IMR-90 (cell line): ENCODE measurements at regions of chr1 and their contacts with region 1.

Region 1: GRCh38 chr1:74771913-74772515 is 39.1 kb downstream of the TYW3 start:
- DNase-seq: peak; percentile 51
- ATAC-seq: peak; percentile 77
- H3K4me3 ChIP-seq: no peak overlapping the region
- H3K27ac ChIP-seq: no peak overlapping the region
- H3K4me1 ChIP-seq: no peaks in the 10 kb centered on the region
- H3K27me3 ChIP-seq: no peaks in the 10 kb centered on the region
- CTCF ChIP-seq: peak; percentile 83
- POLR2A ChIP-seq: no peak
- RAD21 ChIP-seq: peak; percentile 90

Region 2: DNA sequence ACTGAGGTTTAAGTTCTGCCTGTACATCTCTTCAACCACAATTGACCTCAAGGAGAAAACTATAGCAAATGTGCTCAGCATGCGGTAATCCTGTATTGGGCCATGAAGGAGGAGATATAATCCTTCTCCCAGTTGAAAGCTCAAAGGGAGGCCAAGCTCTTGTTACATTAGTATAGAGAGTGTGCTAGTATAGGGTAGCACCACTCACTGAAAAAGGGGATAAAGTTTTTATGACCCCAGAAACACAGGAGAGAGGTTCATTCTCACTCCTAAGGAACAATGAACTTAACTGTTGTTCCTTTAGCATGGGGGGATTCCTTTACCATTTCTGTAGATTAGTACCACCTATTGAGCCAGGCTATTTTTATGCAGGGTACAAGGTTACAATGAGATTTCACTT is 841.7 kb before region 1 on chr1:
- CTCF ChIA-PET with region 1: no interaction called
- POLR2A ChIA-PET with region 1: no interaction called
- dilution Hi-C with region 1: no loop called
- in situ Hi-C with region 1: no loop called
- intact Hi-C with region 1: no loop called
- DNase-seq: no peak
- ATAC-seq: no peak
- H3K4me3 ChIP-seq: no peak overlapping the region
- H3K27ac ChIP-seq: no peak overlapping the region
- H3K4me1 ChIP-seq: no peaks in the 10 kb centered on the region
- H3K27me3 ChIP-seq: no peaks in the 10 kb centered on the region
- CTCF ChIP-seq: no peak
- POLR2A ChIP-seq: no peak
- RAD21 ChIP-seq: no peak

Region 3: DNA sequence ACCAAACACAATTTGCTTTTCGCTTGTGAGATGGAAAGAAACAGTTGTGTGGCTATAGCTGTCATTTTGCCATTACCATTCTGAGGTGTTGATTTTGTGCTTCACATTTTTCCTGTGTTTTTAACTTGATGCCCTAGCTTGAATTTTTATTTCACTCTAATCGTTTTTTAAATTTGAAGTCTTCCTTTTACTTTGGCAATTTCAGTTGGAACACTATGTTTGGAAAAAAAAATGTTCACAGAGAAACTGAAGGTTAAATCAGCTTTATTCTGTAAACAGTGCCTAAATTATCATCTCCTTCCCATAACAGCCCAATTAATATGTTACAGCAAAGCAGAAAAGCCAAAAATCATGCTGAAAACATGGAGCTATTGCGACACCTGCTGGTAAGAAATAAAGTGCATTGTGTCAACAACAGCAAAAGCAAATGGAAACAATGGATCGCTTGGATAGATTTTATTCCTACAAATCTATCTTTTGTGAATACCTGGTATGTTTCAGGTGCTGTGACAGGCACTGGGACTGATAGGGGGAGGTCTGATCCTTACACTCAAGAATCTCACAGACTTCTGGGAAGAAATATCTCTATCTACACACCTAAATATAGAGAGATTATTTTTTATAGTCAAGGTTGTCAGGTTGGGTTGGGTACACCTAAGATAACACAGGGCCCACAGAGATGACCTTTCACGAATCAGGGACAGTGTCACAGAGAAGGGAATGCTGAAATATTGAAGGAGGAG is 82.2 kb before region 1 on chr1:
- CTCF ChIA-PET with region 1: no interaction called
- POLR2A ChIA-PET with region 1: no interaction called
- dilution Hi-C with region 1: no loop called
- in situ Hi-C with region 1: no loop called
- intact Hi-C with region 1: no loop called
- DNase-seq: peak; percentile 52
- ATAC-seq: peak; percentile 75; the same call in 1 of the 2 replicates
- H3K4me3 ChIP-seq: no peak overlapping the region
- H3K27ac ChIP-seq: no peak overlapping the region
- H3K4me1 ChIP-seq: no peaks in the 10 kb centered on the region
- H3K27me3 ChIP-seq: no peaks in the 10 kb centered on the region
- CTCF ChIP-seq: peak; percentile 82
- POLR2A ChIP-seq: no peak
- RAD21 ChIP-seq: peak; percentile 82

Region 4: DNA sequence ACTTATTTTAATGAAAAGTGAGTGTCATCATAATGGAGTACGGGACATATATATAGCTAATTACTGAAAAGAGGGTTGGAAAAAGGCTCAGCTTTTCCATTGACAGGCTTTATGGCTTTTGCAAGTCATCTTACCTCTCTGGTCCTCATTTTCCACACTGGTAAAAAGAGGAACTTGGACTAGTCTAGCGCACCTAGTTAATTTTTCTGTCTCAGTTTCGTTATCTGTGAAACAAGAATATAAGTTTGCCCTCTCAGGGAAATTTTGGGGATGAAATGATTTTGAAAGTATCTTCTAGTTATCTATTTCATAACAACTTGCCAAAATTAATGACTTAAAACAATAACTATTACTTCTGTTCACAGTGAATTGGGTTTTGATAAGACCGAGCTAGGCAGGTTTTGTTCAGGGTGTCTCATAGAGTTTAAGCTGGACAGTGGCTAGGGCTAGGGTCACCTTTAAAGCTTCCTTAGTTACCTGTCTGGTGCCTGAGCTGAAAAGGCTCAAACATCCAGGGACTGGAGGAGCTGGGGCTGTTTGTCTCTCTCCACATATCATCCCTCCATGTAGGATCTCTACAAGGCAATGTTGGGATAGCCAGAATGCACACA is 52.6 kb after region 1 on chr1:
- CTCF ChIA-PET with region 1: no interaction called
- POLR2A ChIA-PET with region 1: no interaction called
- dilution Hi-C with region 1: no loop called
- in situ Hi-C with region 1: no loop called
- intact Hi-C with region 1: no loop called
- DNase-seq: no peak
- ATAC-seq: no peak
- H3K4me3 ChIP-seq: no peak overlapping the region
- H3K27ac ChIP-seq: no peak overlapping the region
- H3K4me1 ChIP-seq: peaks cover 3% of the 10 kb centered on the region; the same call in 1 of the 2 replicates
- H3K27me3 ChIP-seq: no peaks in the 10 kb centered on the region
- CTCF ChIP-seq: no peak
- POLR2A ChIP-seq: no peak
- RAD21 ChIP-seq: no peak

Region 5: GRCh38 chr1:75134647-75135572 is 362.9 kb after region 1 on chr1:
- CTCF ChIA-PET with region 1: no interaction called
- POLR2A ChIA-PET with region 1: no interaction called
- dilution Hi-C with region 1: no loop called
- in situ Hi-C with region 1: no loop called
- intact Hi-C with region 1: loop called (anchors 5 kb)
- DNase-seq: no peak
- ATAC-seq: peak; percentile 17; the same call in 1 of the 2 replicates
- H3K4me3 ChIP-seq: peak overlapping the region; percentile 36
- H3K27ac ChIP-seq: no peak overlapping the region
- H3K4me1 ChIP-seq: no peaks in the 10 kb centered on the region
- H3K27me3 ChIP-seq: peaks cover 75% of the 10 kb centered on the region
- CTCF ChIP-seq: no peak
- POLR2A ChIP-seq: no peak
- RAD21 ChIP-seq: no peak

Region 6: GRCh38 chr1:75203415-75204277 is 431.6 kb after region 1 on chr1:
- CTCF ChIA-PET with region 1: interaction called, 28 read pairs
- POLR2A ChIA-PET with region 1: no interaction called
- dilution Hi-C with region 1: no loop called
- in situ Hi-C with region 1: loop called (anchors 10 kb)
- intact Hi-C with region 1: loop called (anchors 1 kb)
- DNase-seq: peak; percentile 47
- ATAC-seq: peak; percentile 82
- H3K4me3 ChIP-seq: no peak overlapping the region
- H3K27ac ChIP-seq: no peak overlapping the region
- H3K4me1 ChIP-seq: no peaks in the 10 kb centered on the region
- H3K27me3 ChIP-seq: no peaks in the 10 kb centered on the region
- CTCF ChIP-seq: peak; percentile 82
- POLR2A ChIP-seq: no peak
- RAD21 ChIP-seq: peak; percentile 82

Region 7: DNA sequence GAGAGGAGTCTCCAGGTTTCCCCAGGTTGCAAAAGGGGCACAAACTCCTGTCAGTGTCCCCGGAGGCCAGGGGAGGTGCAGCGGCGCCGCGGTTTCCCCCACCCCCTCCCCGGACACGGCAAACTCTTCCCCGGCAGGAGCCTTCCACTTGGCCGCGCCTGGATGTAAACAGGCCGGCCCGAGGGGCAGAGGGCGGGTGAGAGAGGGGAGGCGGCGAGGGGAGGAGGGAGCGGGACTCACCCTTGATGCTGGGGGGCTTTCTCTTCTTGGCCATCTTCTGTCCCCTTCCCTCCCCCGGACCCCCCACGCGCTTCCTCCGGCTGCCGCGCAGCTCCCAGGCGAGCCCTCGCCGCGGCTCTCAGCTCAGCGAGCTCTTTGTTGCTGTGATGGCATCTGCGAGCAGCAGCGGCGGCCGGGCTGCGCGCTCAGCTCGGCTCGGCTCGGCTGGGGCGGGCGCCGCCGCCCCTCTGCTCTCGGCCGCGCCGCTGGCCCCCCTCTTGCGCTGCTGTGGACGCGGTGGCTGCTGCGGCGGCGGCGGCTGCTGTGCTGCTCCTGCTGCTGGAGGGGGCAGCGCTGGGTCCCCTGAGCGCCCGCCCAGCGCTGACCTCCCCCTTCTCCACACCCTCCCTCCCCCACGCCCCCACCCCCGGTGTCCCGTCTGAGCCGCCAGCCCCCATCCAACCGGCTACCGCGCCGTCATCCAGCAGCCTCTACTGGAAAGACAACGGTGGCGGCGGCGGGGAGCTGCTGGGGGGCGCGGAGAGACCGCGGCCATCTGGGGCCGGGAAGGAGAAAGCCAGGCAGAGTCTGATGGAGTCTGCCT is 843.8 kb after region 1 on chr1:
- CTCF ChIA-PET with region 1: no interaction called
- POLR2A ChIA-PET with region 1: no interaction called
- dilution Hi-C with region 1: no loop called
- in situ Hi-C with region 1: no loop called
- intact Hi-C with region 1: loop called (anchors 5 kb)
- DNase-seq: peak; percentile 21
- ATAC-seq: peak; percentile 91
- H3K4me3 ChIP-seq: peak overlapping the region; percentile 24
- H3K27ac ChIP-seq: no peak overlapping the region
- H3K4me1 ChIP-seq: no peaks in the 10 kb centered on the region
- H3K27me3 ChIP-seq: peaks cover 22% of the 10 kb centered on the region
- CTCF ChIP-seq: no peak
- POLR2A ChIP-seq: no peak
- RAD21 ChIP-seq: no peak

Region 8: GRCh38 chr1:75632350-75632949 is 860.4 kb after region 1 on chr1:
- CTCF ChIA-PET with region 1: no interaction called
- POLR2A ChIA-PET with region 1: no interaction called
- dilution Hi-C with region 1: no loop called
- in situ Hi-C with region 1: no loop called
- intact Hi-C with region 1: loop called (anchors 1 kb)
- DNase-seq: peak; percentile 23
- ATAC-seq: peak; percentile 86
- H3K4me3 ChIP-seq: no peak overlapping the region
- H3K27ac ChIP-seq: no peak overlapping the region
- H3K4me1 ChIP-seq: no peaks in the 10 kb centered on the region
- H3K27me3 ChIP-seq: no peaks in the 10 kb centered on the region
- CTCF ChIP-seq: peak; percentile 69
- POLR2A ChIP-seq: no peak
- RAD21 ChIP-seq: peak; percentile 67